Left ventricle myocardium superior (tissue), 1 donor: ENCODE measurements at regions of chr18 and their contacts with region 1.

Region 1: GRCh38 chr18:2547477-2548087 is 23.7 kb downstream of the METTL4 start:
- DNase-seq: no peak
- ATAC-seq: peak; percentile 40

Region 2: DNA sequence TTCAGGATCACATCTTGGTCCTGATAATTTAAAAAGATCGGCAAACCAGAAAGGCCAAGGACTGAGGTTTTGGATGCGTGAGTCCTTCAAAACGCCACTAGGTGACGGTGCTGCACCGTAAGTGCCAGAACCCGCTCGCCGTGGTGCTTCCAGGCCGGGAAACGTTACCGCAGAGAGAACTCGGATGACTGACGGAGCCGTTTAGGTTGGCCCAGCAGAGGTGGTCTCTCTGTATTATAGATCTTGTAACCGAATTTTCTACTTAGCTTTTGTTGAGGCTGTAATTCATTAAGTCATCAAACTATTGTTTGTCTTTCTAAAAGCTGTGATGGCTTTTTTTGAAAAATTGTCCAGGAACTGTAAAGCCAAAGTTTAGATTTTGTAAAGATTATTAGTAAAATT is 1682.7 kb before region 1 on chr18:
- intact Hi-C with region 1: loop called (anchors 10 kb)
- DNase-seq: peak; percentile 68
- ATAC-seq: peak; percentile 77

Region 3: DNA sequence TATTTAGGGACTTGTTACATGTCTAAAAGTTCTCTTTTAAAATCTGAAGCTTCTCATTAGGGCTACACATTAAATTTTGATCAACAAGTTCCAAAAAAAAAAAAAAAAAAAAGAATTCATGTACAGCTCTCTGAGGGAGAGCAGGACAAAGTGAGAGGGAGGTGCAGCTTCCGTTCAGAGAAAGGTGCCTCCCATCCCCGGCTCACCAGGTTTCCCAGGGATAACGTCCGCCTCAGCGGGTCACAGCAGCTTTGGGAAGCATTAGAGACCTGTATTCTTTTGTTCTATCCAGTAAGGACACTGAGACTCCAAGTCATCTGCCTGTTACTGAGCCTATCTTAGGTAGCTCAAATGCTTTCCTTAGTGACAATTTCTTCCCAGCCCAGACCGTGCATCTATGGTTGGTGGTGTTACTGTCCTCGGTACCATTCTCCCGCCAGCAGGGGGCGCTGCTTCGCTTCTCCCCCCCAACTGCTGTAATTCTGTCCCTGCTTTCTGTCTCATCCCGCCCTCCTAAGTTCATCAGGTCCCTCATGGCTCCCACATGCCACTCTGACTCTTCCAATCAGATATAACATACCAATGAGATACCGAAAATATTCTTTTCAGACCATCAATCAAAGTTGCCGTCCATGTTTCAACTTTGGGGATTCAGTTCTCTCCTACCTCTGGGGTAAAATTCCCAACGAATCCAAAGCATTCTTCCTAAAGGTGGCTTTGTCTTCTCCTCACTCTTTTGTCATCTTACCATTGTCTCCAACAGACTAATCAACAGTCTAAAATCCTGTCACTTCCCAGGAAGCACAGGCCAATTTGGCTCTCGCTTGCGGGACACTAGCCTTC is 442.7 kb before region 1 on chr18:
- intact Hi-C with region 1: loop called (anchors 10 kb)
- DNase-seq: peak; percentile 56
- ATAC-seq: peak; percentile 77

Region 4: DNA sequence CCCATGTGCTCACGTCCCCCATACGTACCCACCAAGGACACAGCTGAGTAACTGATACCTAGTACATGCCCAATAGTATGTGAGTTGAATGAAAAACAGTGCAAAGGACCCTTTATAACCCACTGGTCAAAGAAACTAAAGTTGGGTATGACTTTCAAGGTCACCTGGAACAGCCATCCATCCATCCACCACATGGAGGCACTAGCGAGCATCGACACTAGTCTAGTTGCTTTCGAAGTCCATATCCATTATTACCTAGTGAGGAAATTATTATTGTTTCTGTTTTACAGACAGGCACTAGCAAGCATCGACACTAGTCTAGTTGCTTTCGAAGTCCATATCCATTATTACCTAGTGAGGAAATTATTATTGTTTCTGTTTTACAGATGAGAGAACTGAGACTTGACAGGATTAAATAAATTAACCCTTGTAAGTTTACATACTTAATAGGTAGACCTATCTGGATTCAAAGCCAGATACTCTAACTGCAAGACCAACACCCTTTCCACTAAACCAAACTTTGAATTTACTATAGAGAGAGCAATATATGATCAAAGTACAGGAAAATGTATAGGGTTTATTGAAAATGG is 209.9 kb before region 1 on chr18:
- intact Hi-C with region 1: loop called (anchors 10 kb)
- DNase-seq: peak; percentile 35
- ATAC-seq: no peak